Endothelial cell of umbilical vein (primary cell): ENCODE measurements at regions of chr17 and their contacts with region 1.

Region 1: GRCh38 chr17:6276711-6277110 is 158.2 kb downstream of the AIPL1 start:
- DNase-seq: no peak
- H3K4me3 ChIP-seq: no peak overlapping the region
- H3K27ac ChIP-seq: no peak overlapping the region
- H3K4me1 ChIP-seq: no peaks in the 10 kb centered on the region
- H3K27me3 ChIP-seq: peaks cover 0 to 2% of the 10 kb centered on the region in 2 experiments
- CTCF ChIP-seq: peak in 1 of 2 donors; percentile 22
- POLR2A ChIP-seq: no peak

Region 2: DNA sequence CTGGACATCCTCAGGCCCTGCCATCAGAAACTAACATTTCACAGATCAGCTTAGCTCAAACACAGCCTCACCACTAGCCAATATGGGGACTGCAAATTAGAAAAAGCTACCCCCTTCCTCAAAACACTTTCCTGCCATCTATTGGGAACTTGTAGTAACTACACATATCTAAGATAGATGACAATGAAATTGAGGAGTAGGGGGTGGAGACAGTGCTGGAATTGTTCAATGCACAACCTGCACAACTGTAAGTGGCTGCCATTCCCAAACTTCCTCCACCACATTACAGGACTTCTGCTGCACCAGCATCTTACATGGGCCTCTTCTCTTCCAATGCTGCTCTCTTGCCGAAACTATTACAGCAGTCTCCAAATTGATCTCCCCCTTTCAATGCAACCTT is 136.4 kb after region 1 on chr17:
- CTCF ChIA-PET with region 1: interaction called, 4 read pairs
- POLR2A ChIA-PET with region 1: no interaction called
- dilution Hi-C with region 1: no loop called
- intact Hi-C with region 1: loop called (anchors 1 kb)
- DNase-seq: peak; percentile 67
- H3K4me3 ChIP-seq: no peak overlapping the region
- H3K27ac ChIP-seq: no peak overlapping the region
- H3K4me1 ChIP-seq: no peaks in the 10 kb centered on the region
- H3K27me3 ChIP-seq: no peaks in the 10 kb centered on the region
- CTCF ChIP-seq: peak; percentile 50 to 56
- POLR2A ChIP-seq: no peak